ENCODE measurements at regions of chr15 and their contacts with region 1.

Region 1: GRCh38 chr15:51218299-51218938 is 120.0 kb downstream of the CYP19A1 start:
- DNase-seq: peak; percentile 81
- H3K4me3 ChIP-seq: no peak overlapping the region
- CTCF ChIP-seq: no peak

Region 2: GRCh38 chr15:51135296-51135695 is 83.1 kb before region 1 on chr15:
- in situ Hi-C with region 1: loop called (anchors 5 kb)
- DNase-seq: no peak
- H3K4me3 ChIP-seq: no peak overlapping the region
- CTCF ChIP-seq: no peak

Region 3: DNA sequence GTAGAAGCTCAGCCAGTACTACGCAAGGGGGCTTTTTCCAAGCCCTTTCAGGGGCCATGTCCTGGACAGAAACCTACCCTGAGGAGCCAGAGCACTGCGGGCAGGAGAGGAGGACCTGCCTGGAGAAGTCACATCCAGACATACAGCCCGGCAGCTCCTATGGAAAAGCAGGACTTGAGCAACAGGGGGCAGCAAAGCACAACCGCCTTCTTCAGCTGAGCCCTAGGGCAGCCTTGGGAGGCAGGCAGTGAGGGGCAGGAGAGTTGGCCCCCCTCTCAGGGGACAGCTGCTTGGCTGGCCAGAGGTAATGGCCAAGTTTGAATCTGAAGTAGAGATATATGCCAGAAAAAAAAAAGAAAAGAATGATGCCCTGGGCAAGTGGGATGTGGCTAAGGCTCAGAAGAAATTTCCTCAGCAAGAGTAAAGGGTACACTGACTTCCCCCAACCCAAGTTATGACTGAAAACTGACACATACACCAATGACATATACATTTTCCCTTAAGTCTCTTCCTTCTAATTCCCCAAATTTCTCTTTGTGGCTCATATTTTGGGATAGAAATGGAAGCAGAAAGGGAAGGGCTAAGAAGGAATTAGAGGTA is 63.0 kb after region 1 on chr15:
- in situ Hi-C with region 1: no loop called
- DNase-seq: peak; percentile 22
- H3K4me3 ChIP-seq: no peak overlapping the region
- CTCF ChIP-seq: peak; percentile 86

Region 4: GRCh38 chr15:51322621-51323296 is 104.3 kb after region 1 on chr15:
- in situ Hi-C with region 1: no loop called
- DNase-seq: no peak
- H3K4me3 ChIP-seq: no peak overlapping the region
- CTCF ChIP-seq: no peak

Measured in astrocyte of the cerebellum (primary cell).